Activated CD4-positive, alpha-beta T cell treated with anti-CD3 and anti-CD28 coated beads for 36 hours (primary cell): ENCODE measurements at regions of chr1 and their contacts with region 1.

Region 1: GRCh38 chr1:2586154-2587070 is at the start of gene PRXL2B:
- DNase-seq: peak; percentile 98
- ATAC-seq: peak; percentile 72
- H3K4me3 Mint-ChIP-seq: peak within 1 kb of the TSS; percentile 82
- H3K27ac Mint-ChIP-seq: peak within 1 kb of the TSS; percentile 94
- H3K4me1 Mint-ChIP-seq: peaks cover 42% of the 10 kb centered on the region
- H3K27me3 Mint-ChIP-seq: no peaks in the 10 kb centered on the region
- total RNA-seq, gene PRXL2B: 23.7 to 36.8 TPM

Region 2: DNA sequence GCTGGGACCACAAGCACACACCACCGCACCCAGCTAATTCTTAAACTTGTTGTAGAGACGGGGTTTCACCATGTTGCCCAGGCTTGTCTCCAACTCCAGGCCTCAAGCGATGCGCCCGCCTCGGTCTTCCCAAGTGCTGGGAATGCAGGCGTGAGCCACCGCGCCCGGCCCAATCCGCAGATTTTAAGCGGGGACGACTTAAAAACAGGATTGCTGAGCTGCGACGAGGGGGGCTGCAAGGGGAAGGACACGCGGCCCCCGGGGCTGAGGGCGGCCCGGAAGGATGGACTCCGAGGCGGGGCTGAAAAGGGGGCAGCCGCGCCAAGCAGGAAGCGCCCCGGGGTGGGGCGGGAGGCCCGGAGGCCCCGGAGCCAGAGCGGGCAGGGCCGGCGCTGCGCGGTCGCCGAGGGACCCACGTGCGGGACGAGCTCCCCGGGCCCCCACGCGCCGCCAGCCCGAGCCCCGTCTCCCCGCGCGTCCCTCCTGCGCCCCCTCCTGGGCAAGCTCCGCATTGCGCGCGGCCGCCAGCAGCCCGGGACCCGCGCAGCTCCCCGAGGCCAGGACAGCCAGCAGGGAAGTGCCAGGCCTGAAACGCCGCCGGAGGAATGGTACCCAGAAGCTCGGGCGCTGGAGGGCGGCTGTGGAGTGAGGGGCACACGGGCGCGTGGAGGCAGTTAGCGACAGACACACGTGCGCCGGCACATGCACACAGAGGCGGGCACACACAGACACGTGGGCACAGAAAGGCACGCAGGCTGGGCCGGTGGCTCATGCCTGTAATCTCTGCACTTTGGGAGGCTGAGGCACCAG is 541.7 kb before region 1 on chr1:
- CTCF ChIA-PET with region 1: no interaction called
- POLR2A ChIA-PET with region 1: no interaction called
- intact Hi-C with region 1: loop called in 1 of 2 experiments (anchors 5 kb)
- DNase-seq: peak; percentile 88
- ATAC-seq: peak; percentile 82
- H3K4me3 Mint-ChIP-seq: peak overlapping the region; percentile 44
- H3K27ac Mint-ChIP-seq: no peak overlapping the region
- H3K4me1 Mint-ChIP-seq: peaks cover 21% of the 10 kb centered on the region
- H3K27me3 Mint-ChIP-seq: peaks cover 14% of the 10 kb centered on the region

Region 3: DNA sequence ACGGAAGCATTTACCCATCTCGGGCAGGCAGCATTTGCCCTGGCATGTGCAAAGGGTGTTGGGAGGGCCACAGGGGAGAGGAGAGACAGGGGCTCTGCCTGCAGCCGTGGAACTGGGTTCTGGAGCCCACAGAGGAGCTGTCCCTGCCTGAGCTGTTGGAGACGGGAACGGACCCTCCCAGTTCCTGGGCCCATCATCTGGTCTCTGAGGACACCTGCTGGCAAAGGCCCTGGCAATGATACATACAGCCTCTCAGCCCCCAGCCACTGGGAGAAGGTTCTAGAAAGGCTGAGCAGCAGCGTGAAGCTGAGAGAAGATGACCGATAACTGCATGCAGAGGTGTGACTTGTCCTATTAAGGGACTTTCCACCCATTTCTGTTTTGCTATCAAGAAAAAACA is 423.2 kb before region 1 on chr1:
- CTCF ChIA-PET with region 1: no interaction called
- POLR2A ChIA-PET with region 1: no interaction called
- intact Hi-C with region 1: no loop called
- DNase-seq: peak; percentile 28
- ATAC-seq: no peak
- H3K4me3 Mint-ChIP-seq: no peak overlapping the region
- H3K27ac Mint-ChIP-seq: no peak overlapping the region
- H3K4me1 Mint-ChIP-seq: peaks cover 6% of the 10 kb centered on the region
- H3K27me3 Mint-ChIP-seq: no peaks in the 10 kb centered on the region

Region 4: GRCh38 chr1:2205191-2205952 is 381.0 kb before region 1 on chr1:
- CTCF ChIA-PET with region 1: no interaction called
- POLR2A ChIA-PET with region 1: no interaction called
- intact Hi-C with region 1: loop called in 1 of 2 experiments (anchors 1 kb)
- DNase-seq: peak; percentile 98
- ATAC-seq: peak; percentile 88
- H3K4me3 Mint-ChIP-seq: peak overlapping the region; percentile 51
- H3K27ac Mint-ChIP-seq: no peak overlapping the region
- H3K4me1 Mint-ChIP-seq: peaks cover 3% of the 10 kb centered on the region
- H3K27me3 Mint-ChIP-seq: no peaks in the 10 kb centered on the region

Region 5: DNA sequence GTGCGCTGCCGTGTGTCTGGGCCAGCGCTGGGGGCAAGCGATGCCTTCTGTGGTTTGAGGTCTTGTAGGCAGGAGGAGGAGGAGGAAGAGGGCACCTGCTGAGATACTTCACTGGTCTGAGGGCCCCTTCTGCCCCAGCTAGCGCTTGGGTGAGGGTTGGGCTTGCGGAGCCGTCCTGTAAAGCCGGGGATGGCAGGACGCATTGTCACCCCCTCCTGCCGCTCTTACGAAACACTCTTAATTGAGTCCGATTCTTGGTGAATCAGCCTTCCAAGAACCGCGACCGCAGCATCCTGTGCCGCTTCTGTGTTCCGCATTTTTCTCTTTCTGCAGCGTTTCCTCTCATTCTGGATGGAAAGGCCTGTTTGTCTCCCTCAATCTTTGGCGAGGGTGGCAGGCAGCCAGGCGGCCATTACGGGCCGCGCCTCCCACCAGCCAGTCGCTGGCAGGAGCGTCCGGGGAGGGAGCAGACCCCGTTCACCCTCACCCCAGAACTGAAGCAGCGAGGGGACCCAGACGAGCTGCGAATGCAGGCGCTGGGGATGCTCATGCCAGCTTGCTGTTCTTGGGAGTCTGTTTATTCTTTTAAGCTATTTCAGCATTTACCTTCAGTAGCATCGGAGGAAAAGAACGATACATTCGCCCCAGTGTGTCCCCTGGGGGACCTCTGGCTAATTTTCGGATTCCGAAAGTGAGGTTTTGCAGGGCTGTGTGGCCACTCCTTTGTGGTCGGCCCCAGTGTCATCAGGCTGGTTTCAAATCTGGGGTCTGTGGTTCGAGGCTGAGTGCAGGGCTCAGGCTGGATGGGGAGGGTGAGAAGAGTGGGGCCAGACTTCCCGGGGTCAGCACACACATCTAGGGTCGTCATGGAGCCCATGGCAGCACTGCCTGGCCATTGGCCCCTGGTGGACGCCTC is 295.6 kb before region 1 on chr1:
- CTCF ChIA-PET with region 1: no interaction called
- POLR2A ChIA-PET with region 1: no interaction called
- intact Hi-C with region 1: loop called in 1 of 2 experiments (anchors 5 kb)
- DNase-seq: peak; percentile 94
- ATAC-seq: peak; percentile 89
- H3K4me3 Mint-ChIP-seq: peak overlapping the region; percentile 75
- H3K27ac Mint-ChIP-seq: peak overlapping the region; percentile 95
- H3K4me1 Mint-ChIP-seq: peaks cover 87% of the 10 kb centered on the region
- H3K27me3 Mint-ChIP-seq: no peaks in the 10 kb centered on the region

Region 6: GRCh38 chr1:2525920-2526823 is 60.2 kb before region 1 on chr1 and contains the start of gene PANK4:
- CTCF ChIA-PET with region 1: no interaction called
- POLR2A ChIA-PET with region 1: no interaction called
- intact Hi-C with region 1: loop called (anchors 1 to 2 kb)
- DNase-seq: peak; percentile 96
- ATAC-seq: peak; percentile 87
- H3K4me3 Mint-ChIP-seq: peak within 1 kb of the TSS; percentile 77
- H3K27ac Mint-ChIP-seq: peak within 1 kb of the TSS; percentile 91
- H3K4me1 Mint-ChIP-seq: peaks cover 43% of the 10 kb centered on the region
- H3K27me3 Mint-ChIP-seq: peaks cover 3% of the 10 kb centered on the region
- total RNA-seq, gene PANK4: 32.4 to 39.2 TPM

Region 7: DNA sequence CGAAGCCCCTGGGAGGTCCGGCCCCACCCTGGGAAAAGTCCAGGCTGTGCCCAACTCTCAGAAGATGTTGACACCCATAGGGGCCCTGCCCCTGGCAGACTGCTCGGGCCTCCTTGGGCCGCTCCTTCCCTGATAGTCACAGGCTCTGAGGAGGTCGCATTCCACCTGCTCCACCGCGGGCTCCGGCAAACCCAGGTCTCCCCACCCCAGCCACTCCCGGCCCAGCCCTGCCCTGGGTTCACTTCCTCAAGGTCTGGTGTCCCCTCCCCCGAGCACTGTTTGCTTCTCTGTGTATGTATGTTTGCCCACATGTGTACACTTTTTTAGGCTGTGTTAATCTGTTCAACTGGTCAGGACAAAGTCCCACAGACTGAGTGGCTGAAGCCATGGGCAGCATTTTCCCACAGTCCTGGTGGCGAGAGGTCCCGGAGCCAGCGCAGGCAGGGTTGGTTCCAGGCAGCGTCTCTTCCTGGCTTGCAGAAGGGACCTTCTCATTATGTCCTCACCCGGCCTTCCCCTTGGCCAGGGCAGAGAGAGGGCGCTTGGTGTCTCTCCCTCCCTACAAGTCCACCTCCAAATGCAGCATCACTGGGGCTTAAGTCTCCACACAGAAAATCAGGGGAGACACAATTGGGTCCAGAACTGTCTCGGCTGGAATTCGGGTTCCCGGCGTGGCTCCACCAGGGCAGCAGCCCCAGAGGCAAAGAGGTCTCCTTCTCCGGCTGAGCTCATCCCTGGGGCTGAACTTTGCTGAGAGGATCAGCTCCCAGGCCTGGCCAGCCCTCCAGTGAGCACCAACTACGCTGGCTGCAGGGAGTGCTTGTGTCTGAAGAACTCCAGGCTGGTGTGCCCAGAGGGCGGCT is 10.4 kb before region 1 on chr1:
- CTCF ChIA-PET with region 1: interaction called, 3 read pairs
- POLR2A ChIA-PET with region 1: no interaction called
- intact Hi-C with region 1: loop called in 1 of 2 experiments (anchors 1 kb)
- DNase-seq: no peak
- ATAC-seq: no peak
- H3K4me3 Mint-ChIP-seq: peak overlapping the region; percentile 62
- H3K27ac Mint-ChIP-seq: peak overlapping the region; percentile 98
- H3K4me1 Mint-ChIP-seq: peaks cover 43% of the 10 kb centered on the region
- H3K27me3 Mint-ChIP-seq: no peaks in the 10 kb centered on the region

Region 8: GRCh38 chr1:3900119-3900968 is 1313.9 kb after region 1 on chr1 and contains the start of gene C1orf174:
- CTCF ChIA-PET with region 1: no interaction called
- POLR2A ChIA-PET with region 1: no interaction called
- intact Hi-C with region 1: loop called in 1 of 2 experiments (anchors 2 kb)
- DNase-seq: peak; percentile 94
- ATAC-seq: peak; percentile 76
- H3K4me3 Mint-ChIP-seq: peak within 1 kb of the TSS; percentile 87
- H3K27ac Mint-ChIP-seq: peak within 1 kb of the TSS; percentile 98
- H3K4me1 Mint-ChIP-seq: peaks cover 51% of the 10 kb centered on the region
- H3K27me3 Mint-ChIP-seq: no peaks in the 10 kb centered on the region
- total RNA-seq, gene C1orf174: 39.8 to 49.4 TPM